Cardiac septum (tissue), 1 donor: ENCODE measurements at regions of chrX and their contacts with region 1.

Region 1: DNA sequence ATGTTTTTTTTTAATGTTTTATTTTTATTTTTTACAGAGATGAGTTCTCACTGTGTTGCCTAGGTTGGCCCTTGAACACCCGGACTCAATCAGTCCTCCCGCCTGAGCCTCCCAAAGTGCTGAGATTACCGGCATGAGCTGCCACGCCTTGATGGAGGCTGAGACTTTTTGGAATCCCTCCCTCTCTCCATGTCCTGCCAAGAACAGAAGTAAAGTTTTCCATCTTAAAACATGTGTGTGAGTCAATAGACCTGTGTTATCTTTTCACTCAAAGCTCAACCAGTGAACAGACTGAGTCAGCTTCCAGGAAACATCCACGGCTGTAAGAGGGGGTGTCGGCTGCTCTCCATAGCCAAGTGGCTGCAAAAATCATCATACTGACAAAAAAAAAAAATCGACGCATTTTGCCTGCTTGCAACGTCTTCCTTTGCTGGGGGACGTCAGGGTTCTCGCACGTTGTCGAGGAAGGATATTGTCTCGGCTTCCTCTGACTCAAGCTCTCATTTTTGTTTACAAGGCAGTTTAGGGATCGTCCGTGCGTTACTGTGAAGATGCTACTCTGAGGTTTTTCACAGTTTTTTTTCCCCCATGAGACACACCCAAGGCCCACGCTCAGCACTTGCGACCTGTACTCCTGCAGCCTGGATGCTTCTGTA is 10.0 kb upstream of the ASMTL start:
- DNase-seq: no peak

Region 2: DNA sequence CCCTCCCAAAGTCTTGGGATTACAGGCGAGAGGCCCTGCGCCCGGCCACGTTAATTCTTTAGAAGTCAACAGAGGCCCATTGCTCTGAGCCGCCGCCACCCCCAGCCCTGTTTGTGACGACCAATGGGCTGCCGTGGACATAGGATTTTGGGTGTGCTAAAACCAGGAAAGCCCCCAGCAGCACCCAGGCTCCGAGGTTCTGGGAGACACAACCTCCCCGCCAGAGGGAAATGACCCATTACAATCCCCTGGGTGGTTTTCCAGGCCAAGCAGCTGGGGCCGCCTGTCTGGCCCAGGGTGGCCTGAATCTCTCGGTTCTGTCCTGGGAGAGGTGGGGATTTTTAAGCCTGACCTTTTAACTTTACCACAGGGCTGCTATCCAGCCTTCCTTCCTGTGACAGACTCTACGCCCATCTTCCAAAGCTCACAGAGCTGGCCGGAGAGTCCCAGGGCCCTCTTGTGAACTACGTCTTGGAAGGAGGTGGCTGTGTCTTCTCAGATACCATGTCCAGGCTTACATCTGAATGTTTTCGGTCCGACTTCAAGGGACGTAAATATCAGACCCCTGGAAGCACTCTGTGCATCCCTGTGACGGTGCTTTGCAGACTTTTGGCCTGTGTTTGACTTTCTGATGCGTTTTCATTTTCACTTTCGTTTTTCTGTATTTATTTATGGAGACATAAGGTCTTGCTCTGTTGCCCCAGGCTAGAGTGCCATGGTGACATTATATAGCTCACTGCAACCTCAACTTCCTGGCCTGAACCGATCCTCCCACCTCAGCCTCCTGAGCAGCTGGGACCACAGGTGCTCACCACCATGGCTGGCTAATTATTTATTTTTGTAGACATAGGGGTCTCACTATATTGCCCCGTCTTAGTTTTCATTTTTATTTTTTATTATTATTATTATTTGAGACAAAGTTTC is 38.2 kb after region 1 on chrX:
- intact Hi-C with region 1: loop called (anchors 2 kb)
- DNase-seq: no peak